Left colon (tissue), 2 donors: ENCODE measurements at regions of chr13 and their contacts with region 1.

Region 1: GRCh38 chr13:100707818-100708740 is 33.5 kb upstream of the TMTC4 start:
- DNase-seq: no peak
- ATAC-seq: no peak

Region 2: DNA sequence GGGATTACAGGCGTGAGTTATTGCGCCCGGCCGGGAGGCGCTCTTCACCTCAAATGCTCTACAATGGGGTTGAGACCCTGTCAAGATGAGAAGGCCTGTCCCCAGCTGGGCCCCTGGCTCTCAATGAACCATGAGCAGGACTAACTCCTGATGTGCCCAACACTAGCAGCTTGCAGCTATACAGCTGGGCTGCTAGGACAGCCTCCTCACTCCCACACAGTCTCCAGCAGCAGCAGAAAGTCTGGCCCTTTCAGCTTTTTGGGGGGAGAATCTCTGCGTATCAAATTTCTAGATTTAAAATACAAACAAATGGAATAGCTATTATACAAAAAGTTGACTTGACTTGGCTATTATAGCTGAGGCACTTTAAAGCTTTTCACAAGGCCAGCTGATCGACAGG is 63.7 kb before region 1 on chr13:
- intact Hi-C with region 1: loop called in 1 of 2 experiments (anchors 5 kb)
- DNase-seq: no peak
- ATAC-seq: no peak